ENCODE measurements at regions of chr1 and their contacts with region 1.

Region 1: GRCh38 chr1:229227298-229227919 is 43.5 kb upstream of the RAB4A start:
- DNase-seq: peak; percentile 81 to 89
- ATAC-seq: peak; percentile 62 to 78
- H3K4me3 ChIP-seq: no peak overlapping the region
- H3K27ac ChIP-seq: peak overlapping the region; percentile 43 to 52; a peak in 5 of 6 replicates
- H3K4me1 ChIP-seq: peaks cover 81% of the 10 kb centered on the region
- CTCF ChIP-seq: peak; percentile 97
- EP300 ChIP-seq: no peak
- POLR2A ChIP-seq: no peak
- RAD21 ChIP-seq: peak; percentile 95 to 98

Region 2: DNA sequence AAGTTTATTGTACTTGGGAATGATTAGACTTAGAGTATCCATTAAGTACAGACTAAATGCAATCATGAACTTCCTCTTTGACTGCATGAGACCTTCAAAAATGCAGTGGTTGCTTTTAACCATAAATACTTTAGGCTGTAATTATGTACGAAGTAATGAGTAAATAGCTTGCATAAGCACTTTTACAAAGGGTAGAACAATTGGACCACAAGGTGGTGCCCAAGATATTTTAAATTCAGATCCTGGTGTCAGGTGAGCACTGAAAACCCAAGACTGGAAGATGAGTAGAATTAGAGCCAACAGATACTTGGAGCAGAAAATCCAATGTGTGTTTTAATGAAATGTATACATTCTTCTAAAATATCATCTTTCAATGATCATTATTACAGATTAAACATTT is 535.5 kb before region 1 on chr1:
- CTCF ChIA-PET with region 1: interaction called, 99 read pairs
- POLR2A ChIA-PET with region 1: no interaction called
- DNase-seq: peak; percentile 69 to 72
- ATAC-seq: peak in 1 of 2 experiments; percentile 80; a peak in 4 of 6 replicates
- H3K4me3 ChIP-seq: no peak overlapping the region
- H3K27ac ChIP-seq: no peak overlapping the region
- H3K4me1 ChIP-seq: peaks cover 7% of the 10 kb centered on the region; the same call in 1 of the 3 replicates
- CTCF ChIP-seq: peak; percentile 77
- EP300 ChIP-seq: no peak
- POLR2A ChIP-seq: no peak
- RAD21 ChIP-seq: peak; percentile 87 to 89

Region 3: DNA sequence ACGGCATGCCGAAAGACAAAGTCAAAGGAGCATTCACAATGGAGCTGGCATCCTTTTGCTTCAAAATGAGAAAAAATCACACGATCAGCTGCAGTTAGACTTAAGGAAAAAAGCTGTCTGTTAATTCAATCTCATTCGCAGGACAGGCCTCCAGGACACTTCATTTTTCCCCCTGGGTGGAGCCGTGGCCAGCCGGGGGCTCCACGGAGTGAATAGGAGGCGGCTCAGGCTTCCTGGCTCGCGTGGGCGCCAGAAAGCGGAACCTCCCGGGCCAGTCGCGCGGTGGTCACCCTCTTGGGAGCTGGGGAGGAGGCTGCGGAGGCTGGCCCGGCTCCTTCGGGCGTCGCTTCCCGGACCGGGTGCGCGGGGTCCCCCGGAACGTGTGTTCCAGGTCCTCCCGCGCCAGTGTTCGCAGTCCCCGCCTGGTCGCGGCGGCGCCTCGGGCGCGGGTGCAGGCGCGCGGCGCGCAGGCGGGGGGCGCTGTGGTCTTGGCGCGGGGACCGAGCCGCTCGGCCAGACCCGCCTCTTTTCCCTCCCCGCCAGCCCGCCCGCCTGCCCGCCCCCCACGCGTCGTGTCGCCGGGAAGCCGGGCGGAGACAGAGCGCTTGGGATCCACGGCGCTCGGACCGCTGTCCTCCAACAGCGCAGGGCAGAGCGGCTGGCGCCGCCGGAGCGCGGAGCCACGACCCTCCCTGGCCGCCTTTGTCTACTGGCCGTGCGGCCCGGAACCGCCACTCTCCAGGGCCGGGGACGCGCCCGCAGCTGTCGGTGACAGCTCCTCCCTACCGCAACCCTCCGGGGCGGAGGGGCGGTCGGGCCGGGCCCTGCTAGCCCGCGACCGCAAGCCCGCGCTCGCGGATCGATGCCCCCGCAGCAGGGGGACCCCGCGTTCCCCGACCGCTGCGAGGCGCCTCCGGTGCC is 492.3 kb before region 1 on chr1 and contains the start of gene RHOU:
- CTCF ChIA-PET with region 1: interaction called, 82 read pairs
- POLR2A ChIA-PET with region 1: no interaction called
- DNase-seq: peak; percentile 67 to 68
- ATAC-seq: peak; percentile 95
- H3K4me3 ChIP-seq: peak within 1 kb of the TSS; percentile 88
- H3K27ac ChIP-seq: peak within 1 kb of the TSS; percentile 93 to 95
- H3K4me1 ChIP-seq: peaks cover 18% of the 10 kb centered on the region; the same call in 2 of the 3 replicates
- CTCF ChIP-seq: peak; percentile 96
- EP300 ChIP-seq: no peak
- POLR2A ChIP-seq: peak; percentile 37; the same call in 1 of the 2 replicates
- RAD21 ChIP-seq: peak; percentile 56 to 98
- polyA plus RNA-seq, gene RHOU: 11.5 and 12.8 TPM in 2 replicates

Region 4: DNA sequence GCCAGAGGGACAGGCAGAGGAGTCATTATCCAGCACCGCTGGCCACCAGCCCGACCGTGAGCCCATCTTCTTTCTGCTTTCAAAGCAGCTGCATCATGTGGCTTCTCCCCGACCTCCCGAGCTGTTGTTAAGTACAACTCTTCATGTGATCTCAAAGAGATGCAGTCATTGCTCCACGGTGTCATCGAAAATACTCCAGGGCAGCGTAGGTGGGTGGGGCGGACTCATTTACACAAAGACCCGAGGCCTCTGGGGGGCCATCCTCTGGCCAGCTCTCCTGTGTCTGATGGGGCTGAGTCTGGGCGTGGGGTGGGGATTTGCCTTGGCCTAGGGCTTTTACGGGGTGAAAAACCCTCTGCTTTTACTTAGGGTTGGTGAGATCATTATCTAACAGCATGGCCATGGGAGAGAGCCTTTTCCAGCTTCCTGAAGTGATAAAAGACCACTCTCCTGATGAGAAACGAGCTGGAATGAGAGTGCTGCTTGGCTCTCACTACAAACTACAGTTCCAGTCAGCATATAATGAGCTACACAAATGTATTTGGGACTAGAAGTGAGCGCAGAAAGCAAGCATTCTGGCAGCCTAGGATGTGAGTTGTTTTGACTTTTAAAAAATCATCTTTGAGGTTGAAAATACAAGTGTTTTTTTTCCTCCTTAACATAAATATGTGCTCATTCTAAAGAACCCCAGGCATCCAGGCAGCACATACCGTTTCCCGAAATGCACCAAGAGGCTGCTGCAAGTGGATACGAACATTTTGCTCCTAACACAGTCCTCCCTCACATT is 327.1 kb before region 1 on chr1:
- CTCF ChIA-PET with region 1: interaction called, 11 read pairs
- POLR2A ChIA-PET with region 1: no interaction called
- DNase-seq: no peak
- ATAC-seq: no peak
- H3K4me3 ChIP-seq: no peak overlapping the region
- H3K27ac ChIP-seq: no peak overlapping the region
- H3K4me1 ChIP-seq: peaks cover 19% of the 10 kb centered on the region
- CTCF ChIP-seq: no peak
- EP300 ChIP-seq: no peak
- POLR2A ChIP-seq: no peak
- RAD21 ChIP-seq: no peak

Region 5: DNA sequence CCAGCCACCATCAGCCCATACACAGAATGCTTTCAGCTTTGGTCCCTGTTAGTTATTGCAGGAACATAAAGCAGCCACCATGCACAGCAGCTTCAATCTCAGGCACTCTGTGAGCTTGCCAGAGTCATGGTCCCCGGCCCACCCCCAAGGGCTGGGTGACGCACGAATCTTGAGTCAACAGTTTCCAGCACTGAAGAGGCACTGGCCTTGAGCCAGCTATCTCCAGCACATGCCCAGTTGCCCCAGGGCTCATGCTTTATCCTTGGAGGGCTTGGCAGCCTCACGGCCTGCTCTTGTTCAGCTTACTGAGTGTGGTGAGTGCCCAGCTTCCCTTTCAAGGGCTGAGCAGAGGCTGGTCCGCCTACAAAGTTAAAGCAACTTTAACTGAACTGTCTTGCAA is 157.2 kb before region 1 on chr1:
- CTCF ChIA-PET with region 1: interaction called, 10 read pairs
- POLR2A ChIA-PET with region 1: no interaction called
- DNase-seq: peak; percentile 79 to 93
- ATAC-seq: peak; percentile 92 to 95
- H3K4me3 ChIP-seq: no peak overlapping the region
- H3K27ac ChIP-seq: peak overlapping the region; percentile 70 to 79
- H3K4me1 ChIP-seq: peaks cover 38% of the 10 kb centered on the region
- CTCF ChIP-seq: no peak
- EP300 ChIP-seq: peak in 1 of 2 experiments; percentile 49; a peak in 2 of 5 replicates
- POLR2A ChIP-seq: no peak
- RAD21 ChIP-seq: peak; percentile 28 to 48; a peak in 4 of 5 replicates

Region 6: DNA sequence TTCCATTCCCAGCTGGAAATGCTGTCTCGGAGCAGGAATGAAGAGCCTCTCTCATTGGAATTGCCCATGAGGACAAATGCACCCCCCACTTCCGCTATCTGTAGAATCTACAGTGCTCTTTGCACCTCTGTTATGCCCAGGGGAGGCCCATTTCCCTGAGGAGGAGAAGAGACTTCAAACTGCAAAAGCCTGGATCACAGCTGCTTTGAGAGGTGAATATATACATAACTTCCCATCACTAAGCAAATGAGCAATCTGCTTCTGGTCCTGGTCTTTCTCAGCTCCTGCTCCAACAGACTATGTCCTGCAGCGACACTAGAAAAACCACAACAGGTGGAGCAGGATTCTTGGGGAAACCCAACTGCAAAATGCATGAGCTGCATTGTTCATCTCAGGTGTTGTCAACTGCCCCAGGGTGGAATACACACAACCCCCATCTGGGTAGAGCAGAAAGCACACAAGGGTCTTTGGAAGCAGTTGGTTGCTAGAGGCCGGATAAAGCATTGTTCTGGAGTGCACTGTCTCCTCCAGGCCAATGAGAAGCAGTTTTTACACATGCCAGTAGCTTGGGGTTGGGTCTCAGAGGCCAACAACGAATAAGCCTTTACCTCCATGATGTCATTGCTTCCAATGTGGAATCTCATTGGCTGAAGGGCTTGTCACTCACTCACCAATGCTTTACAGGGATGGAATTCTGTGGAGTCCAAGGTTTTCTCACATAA is 24.2 kb before region 1 on chr1:
- CTCF ChIA-PET with region 1: interaction called, 14 read pairs
- POLR2A ChIA-PET with region 1: no interaction called
- DNase-seq: peak; percentile 43 to 83
- ATAC-seq: peak; percentile 45 to 85; a peak in 4 of 6 replicates
- H3K4me3 ChIP-seq: no peak overlapping the region
- H3K27ac ChIP-seq: no peak overlapping the region
- H3K4me1 ChIP-seq: peaks cover 3% of the 10 kb centered on the region; the same call in 1 of the 3 replicates
- CTCF ChIP-seq: no peak
- EP300 ChIP-seq: no peak
- POLR2A ChIP-seq: no peak
- RAD21 ChIP-seq: no peak